ENCODE measurements at regions of chr3 and their contacts with region 1.

Region 1: DNA sequence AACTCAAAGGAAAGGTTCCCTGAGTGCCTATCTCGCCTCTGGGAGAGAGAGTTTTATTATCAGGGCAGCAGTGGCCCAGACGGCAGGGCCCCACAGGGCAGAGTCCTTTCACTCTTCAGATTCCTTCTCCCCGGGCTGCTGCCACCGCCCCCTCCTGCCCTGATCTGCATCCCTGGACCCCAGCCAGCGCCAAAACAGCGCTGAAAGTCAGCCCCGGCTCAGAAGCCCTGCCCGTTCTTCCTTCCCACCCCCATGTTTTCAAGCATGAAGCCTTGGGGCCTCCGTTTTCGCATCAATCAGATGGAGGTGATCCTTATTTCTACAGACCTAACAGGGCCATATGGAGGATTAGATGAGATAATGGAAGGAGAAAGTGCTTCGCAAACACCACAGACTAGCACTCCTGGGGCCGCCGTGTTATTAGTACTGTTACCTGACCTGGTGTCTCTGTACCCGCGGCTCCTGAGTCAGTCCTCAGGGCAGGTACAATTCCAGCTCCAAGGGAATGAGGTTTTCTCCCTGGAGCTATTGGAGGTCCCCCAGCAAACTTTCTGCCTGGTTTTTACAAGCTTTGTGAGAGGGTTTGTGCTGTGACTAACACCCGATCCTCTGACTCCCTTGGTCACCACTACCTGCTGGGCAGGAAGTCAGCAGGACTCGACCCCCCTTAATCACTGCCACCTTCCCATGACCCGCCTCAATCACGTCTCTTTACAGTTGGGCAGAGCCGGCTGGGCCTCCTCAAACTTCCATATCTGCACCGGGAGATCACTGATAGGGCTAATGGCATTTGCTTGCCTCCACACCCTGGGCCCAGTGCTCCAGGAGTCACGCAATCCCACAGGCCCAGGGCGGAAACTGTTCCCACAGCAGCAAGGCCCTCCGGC is 39.5 kb upstream of the TSEN2 start:
- DNase-seq: peak; percentile 99
- ATAC-seq: peak; percentile 83
- H3K4me3 ChIP-seq: peak overlapping the region; percentile 18; the same call in 1 of the 2 replicates
- H3K27ac ChIP-seq: peak overlapping the region; percentile 98
- H3K4me1 ChIP-seq: peaks cover 39% of the 10 kb centered on the region
- H3K27me3 ChIP-seq: no peaks in the 10 kb centered on the region
- CTCF ChIP-seq: no peak

Region 2: GRCh38 chr3:12384451-12385233 is 60.2 kb before region 1 on chr3:
- CTCF ChIA-PET with region 1: no interaction called
- POLR2A ChIA-PET with region 1: no interaction called
- intact Hi-C with region 1: loop called (anchors 1 kb)
- DNase-seq: no peak
- ATAC-seq: no peak
- H3K4me3 ChIP-seq: no peak overlapping the region
- H3K27ac ChIP-seq: peak overlapping the region; percentile 10
- H3K4me1 ChIP-seq: peaks cover 44% of the 10 kb centered on the region
- H3K27me3 ChIP-seq: no peaks in the 10 kb centered on the region
- CTCF ChIP-seq: no peak

Region 3: GRCh38 chr3:12405432-12406272 is 39.2 kb before region 1 on chr3:
- CTCF ChIA-PET with region 1: no interaction called
- POLR2A ChIA-PET with region 1: no interaction called
- intact Hi-C with region 1: loop called (anchors 1 kb)
- DNase-seq: peak; percentile 98
- ATAC-seq: peak; percentile 94
- H3K4me3 ChIP-seq: 0 out of 2 replicates have a peak overlapping the region, but pooled peaks have one; percentile 15
- H3K27ac ChIP-seq: peak overlapping the region; percentile 92
- H3K4me1 ChIP-seq: peaks cover 59% of the 10 kb centered on the region
- H3K27me3 ChIP-seq: no peaks in the 10 kb centered on the region
- CTCF ChIP-seq: no peak

Region 4: DNA sequence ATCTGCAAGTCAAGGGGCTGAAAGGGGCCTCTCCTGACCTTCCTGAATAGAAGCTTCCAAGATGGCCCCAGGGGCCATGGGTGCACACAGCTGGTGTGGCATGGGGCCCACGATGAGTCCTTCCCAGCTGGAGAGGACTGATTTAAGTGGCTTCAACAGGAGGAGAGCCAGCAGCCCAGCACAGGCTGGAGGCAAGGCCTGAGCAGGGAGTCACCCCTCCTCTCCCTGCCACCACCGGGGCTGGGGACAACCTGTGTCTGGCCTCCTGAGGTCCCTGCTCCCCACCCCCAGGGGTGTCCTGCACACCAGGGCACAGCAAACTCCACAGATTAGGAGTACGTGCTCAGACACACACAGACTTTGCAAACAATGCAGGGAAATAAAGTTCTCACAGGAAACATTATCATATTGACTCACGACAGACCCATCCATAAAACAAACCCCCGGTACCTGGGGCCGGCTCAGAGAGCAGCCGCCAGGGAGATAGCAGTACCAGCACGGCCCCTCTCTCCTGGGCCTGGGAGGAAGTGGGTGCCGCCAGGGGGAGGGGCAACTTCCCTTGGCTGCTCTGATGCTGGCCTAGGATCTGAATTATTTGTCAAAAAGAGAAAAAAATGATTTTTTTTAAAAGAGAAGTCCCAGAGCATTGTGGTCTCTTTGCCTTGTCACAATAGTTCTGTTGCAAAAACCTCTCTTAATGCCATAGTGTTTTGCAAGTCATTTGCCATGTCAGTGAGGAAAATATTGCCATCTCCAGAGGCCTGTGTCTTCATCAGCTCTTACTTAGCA is 17.5 kb after region 1 on chr3:
- CTCF ChIA-PET with region 1: no interaction called
- POLR2A ChIA-PET with region 1: no interaction called
- intact Hi-C with region 1: loop called (anchors 1 kb)
- DNase-seq: peak; percentile 92
- ATAC-seq: peak; percentile 89
- H3K4me3 ChIP-seq: no peak overlapping the region
- H3K27ac ChIP-seq: peak overlapping the region; percentile 97
- H3K4me1 ChIP-seq: peaks cover 32% of the 10 kb centered on the region
- H3K27me3 ChIP-seq: no peaks in the 10 kb centered on the region
- CTCF ChIP-seq: no peak

Region 5: DNA sequence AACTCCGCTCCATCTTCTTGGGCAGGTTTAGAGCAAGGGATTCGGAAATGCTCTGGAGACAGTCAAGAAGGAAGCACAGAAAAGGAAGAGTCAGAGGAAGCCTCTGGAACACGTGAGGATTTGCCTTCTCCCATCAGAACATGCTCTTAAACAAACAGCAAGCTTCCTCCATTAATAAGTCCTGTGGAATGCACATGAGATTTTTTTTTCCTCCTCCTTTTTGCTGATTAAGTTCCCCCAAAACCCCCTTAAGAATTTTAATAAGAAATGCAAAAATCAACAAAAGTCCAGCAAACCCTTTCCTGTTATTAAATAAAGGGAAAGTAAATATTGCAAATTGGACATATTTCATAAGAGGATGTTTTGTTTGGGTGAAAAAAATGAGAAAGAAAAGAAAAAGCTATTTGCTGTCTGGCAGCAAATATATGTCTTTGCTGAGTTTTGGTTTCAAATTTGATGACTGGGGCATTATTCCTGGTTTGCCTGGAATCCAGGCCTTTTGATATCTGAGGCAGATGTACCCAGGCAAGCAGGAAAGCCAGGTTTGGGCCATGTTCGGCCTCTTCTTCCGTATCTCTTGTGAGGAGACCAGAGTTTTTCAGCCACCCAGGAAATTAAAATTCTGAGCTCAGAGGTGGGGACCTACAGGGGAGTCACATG is 31.5 kb after region 1 on chr3:
- CTCF ChIA-PET with region 1: interaction called, 5 read pairs
- POLR2A ChIA-PET with region 1: interaction called, 8 read pairs
- intact Hi-C with region 1: loop called (anchors 1 kb)
- DNase-seq: peak; percentile 92
- ATAC-seq: peak; percentile 64
- H3K4me3 ChIP-seq: no peak overlapping the region
- H3K27ac ChIP-seq: peak overlapping the region; percentile 94
- H3K4me1 ChIP-seq: peaks cover 48% of the 10 kb centered on the region
- H3K27me3 ChIP-seq: no peaks in the 10 kb centered on the region
- CTCF ChIP-seq: no peak

Measured in PC-3 (cell line).